ENCODE measurements at regions of chr3 and their contacts with region 1.

Region 1: GRCh38 chr3:157130467-157131251 is 29.3 kb downstream of the CCNL1 start:
- DNase-seq: peak; percentile 73
- ATAC-seq: peak; percentile 4 to 27

Region 2: GRCh38 chr3:156554842-156555687 is 575.6 kb before region 1 on chr3 and contains the start of gene SSR3:
- intact Hi-C with region 1: loop called in 1 of 2 experiments (anchors 5 kb)
- DNase-seq: peak; percentile 100
- ATAC-seq: peak; percentile 100
- total RNA-seq, gene SSR3: 145 to 162 TPM

Region 3: DNA sequence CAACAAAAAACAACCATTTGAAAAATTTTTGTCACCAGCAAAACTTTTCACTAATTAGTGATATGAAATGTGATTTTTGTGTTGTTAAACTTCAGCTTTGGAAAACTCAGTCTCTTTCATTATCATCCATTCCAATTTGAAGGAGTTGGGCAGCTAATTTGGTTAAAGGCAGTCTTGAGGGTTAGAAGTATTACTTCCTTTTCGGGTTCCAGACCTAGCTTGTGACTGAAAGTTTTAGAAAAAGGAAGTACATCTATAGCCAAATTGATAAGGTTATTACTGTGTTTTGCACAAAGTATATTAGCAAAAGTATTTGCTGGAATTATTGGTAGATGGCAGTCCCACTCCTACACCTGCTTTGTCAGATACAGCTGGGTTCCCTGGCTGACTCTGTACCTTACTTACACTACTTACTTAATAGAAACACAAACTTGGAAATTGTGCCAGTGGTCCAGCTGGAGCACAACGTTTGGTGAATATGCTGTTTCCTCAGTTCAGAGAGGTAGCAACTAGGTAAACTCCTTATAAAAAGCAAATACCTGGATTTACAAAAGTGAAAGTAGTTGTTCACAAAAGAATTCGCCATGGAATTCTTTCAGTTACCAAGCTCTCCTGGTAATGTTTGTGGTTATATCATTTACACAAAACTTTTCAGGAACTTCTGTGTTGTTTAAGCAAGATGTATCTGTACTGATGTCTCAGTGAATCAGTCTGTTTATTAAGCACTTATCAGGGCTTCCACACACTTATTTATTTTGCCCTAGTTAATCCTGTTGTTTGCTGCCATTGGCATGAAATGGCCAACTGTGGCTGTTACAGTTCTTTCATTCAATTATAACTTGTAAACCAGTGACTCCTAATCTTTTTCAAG is 424.7 kb before region 1 on chr3:
- intact Hi-C with region 1: no loop called
- DNase-seq: no peak
- ATAC-seq: no peak

Region 4: GRCh38 chr3:156826144-156826895 is 304.3 kb before region 1 on chr3 and contains the start of gene LEKR1:
- intact Hi-C with region 1: loop called in 1 of 2 experiments (anchors 2 kb)
- DNase-seq: peak; percentile 93
- ATAC-seq: peak; percentile 95 to 96
- total RNA-seq, gene LEKR1: 0.65 to 2.3 TPM

Region 5: DNA sequence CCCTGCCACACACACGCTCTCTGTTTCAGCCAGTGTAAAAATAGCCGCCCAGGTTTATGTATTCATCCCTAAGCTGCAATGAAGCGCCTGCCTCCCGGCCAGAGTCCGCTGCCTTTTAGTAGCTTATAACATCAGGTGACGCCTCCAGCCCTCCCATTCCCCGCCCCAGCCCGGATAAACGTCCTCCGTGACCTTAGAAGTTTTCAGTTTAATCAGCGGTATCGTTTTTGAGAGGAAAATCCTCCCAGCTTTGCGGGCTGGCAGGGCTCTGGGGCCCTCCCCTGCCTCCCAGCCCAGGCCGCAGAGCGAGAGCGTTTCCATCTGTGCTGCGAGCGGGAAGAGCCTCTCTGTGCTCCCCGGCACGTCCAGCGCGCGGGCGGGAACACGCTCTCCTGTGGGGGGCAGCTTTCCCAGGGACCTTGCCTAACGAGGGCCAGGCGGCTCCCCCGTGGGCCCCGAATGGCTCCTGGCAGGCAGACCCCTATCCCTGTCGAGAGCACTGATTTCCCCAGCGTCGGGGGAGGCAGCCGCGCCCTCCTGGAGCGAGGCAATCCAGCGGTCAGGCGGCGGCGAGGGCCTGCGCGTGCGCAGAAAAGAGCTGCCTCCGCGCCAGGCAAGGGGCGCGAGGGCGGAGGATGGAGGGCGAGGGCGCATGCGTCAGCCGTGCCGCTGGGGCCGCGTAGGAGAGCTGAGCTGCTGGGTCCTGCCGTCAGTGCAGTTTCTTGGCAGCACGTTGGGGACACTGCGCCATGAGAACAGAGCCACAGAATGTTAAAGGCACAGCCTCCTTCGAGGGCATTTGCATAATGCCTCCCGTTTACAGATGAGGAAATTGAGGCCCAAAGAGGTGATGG is 41.8 kb before region 1 on chr3:
- intact Hi-C with region 1: loop called (anchors 2 to 5 kb)
- DNase-seq: peak; percentile 96
- ATAC-seq: peak; percentile 87 to 88

Region 6: GRCh38 chr3:157261000-157261399 is 130.3 kb after region 1 on chr3:
- intact Hi-C with region 1: no loop called
- DNase-seq: no peak
- ATAC-seq: no peak

Region 7: GRCh38 chr3:157429708-157430107 is 299.0 kb after region 1 on chr3:
- intact Hi-C with region 1: no loop called
- DNase-seq: no peak
- ATAC-seq: no peak

Measured in left cardiac atrium (tissue), 4 donors.